Endothelial cell of umbilical vein (primary cell): ENCODE measurements at regions of chr17 and their contacts with region 1.

Region 1: GRCh38 chr17:31437720-31438420 is 46.4 kb downstream of the RAB11FIP4 start:
- DNase-seq: no peak
- H3K4me3 ChIP-seq: no peak overlapping the region
- H3K27ac ChIP-seq: no peak overlapping the region
- H3K4me1 ChIP-seq: no peaks in the 10 kb centered on the region
- H3K27me3 ChIP-seq: no peaks in the 10 kb centered on the region
- CTCF ChIP-seq: no peak
- POLR2A ChIP-seq: no peak

Region 2: GRCh38 chr17:31388770-31389661 is 48.9 kb before region 1 on chr17:
- CTCF ChIA-PET with region 1: interaction called, 11 read pairs
- POLR2A ChIA-PET with region 1: no interaction called
- dilution Hi-C with region 1: no loop called
- intact Hi-C with region 1: no loop called
- DNase-seq: peak; percentile 32
- H3K4me3 ChIP-seq: no peak overlapping the region
- H3K27ac ChIP-seq: no peak overlapping the region
- H3K4me1 ChIP-seq: no peaks in the 10 kb centered on the region
- H3K27me3 ChIP-seq: peaks cover 13 to 17% of the 10 kb centered on the region in 2 experiments
- CTCF ChIP-seq: peak; percentile 78 to 90
- POLR2A ChIP-seq: no peak

Region 3: GRCh38 chr17:31475378-31476162 is 37.7 kb after region 1 on chr17:
- CTCF ChIA-PET with region 1: no interaction called
- POLR2A ChIA-PET with region 1: no interaction called
- dilution Hi-C with region 1: no loop called
- intact Hi-C with region 1: no loop called
- DNase-seq: no peak
- H3K4me3 ChIP-seq: no peak overlapping the region
- H3K27ac ChIP-seq: no peak overlapping the region
- H3K4me1 ChIP-seq: no peaks in the 10 kb centered on the region
- H3K27me3 ChIP-seq: peaks cover 3 to 7% of the 10 kb centered on the region in 2 experiments
- CTCF ChIP-seq: no peak
- POLR2A ChIP-seq: no peak

Region 4: DNA sequence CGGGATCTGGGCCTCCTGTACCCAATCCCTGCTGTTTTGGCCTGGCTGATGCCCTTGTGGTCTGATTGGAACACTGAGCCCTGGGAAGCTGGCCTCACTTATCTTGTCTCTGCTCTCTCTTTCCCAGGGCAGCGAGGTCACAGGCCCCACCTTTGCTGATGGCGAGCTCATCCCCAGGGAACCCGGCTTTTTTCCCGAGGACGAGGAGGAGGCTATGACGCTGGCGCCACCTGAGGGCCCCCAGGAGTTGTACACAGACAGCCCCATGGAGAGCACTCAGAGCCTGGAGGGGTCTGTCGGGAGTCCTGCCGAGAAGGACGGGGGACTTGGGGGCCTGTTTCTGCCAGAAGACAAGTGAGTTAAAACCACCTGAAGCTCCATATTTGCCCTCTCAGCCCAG is 79.7 kb after region 1 on chr17:
- CTCF ChIA-PET with region 1: interaction called, 85 read pairs
- POLR2A ChIA-PET with region 1: no interaction called
- dilution Hi-C with region 1: no loop called
- intact Hi-C with region 1: no loop called
- DNase-seq: no peak
- H3K4me3 ChIP-seq: no peak overlapping the region
- H3K27ac ChIP-seq: no peak overlapping the region
- H3K4me1 ChIP-seq: no peaks in the 10 kb centered on the region
- H3K27me3 ChIP-seq: no peaks in the 10 kb centered on the region
- CTCF ChIP-seq: peak in 1 of 2 donors; percentile 33
- POLR2A ChIP-seq: no peak

Region 5: DNA sequence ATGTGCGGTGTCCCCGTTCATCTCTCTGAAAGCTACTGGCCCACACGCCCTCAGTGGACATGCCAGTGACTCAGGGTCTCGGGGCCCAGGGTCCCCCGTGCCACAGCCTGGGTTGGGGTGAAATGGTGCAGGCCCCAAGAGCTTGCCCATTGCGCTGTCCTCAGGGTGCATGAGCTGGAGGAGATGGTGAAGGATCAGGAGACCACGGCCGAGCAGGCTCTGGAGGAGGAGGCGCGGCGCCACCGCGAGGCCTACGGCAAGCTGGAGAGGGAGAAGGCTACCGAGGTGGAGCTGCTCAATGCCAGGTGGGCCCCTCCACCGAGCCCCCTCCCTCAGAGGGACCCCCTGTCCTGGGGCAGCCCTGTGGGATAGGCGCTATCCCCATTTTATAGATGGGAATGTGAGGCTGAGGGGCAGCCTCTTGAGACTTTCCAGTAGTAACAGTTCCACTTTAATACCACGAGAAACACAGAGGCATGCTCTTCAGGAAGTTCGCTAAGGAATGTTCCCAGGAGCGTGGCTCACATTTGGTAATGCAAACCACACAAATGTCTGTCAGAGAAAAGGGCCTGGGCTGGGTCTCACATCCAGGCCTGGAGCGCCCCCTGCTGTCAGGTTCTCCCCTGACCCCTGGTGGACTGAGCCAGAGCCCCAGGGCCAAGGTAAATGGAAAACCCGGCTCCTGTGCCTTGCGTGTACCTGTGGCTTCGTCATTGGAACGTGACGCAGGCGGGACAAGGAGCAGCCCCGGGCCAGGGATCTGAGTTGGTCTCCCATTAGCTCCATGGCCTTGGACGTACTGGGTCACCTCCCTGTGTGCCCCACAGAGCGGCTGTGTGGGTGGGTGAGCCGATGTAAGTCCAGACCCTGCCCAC is 87.3 kb after region 1 on chr17:
- CTCF ChIA-PET with region 1: interaction called, 85 read pairs
- POLR2A ChIA-PET with region 1: no interaction called
- dilution Hi-C with region 1: no loop called
- intact Hi-C with region 1: loop called (anchors 1 kb)
- DNase-seq: peak; percentile 51
- H3K4me3 ChIP-seq: no peak overlapping the region
- H3K27ac ChIP-seq: no peak overlapping the region
- H3K4me1 ChIP-seq: no peaks in the 10 kb centered on the region
- H3K27me3 ChIP-seq: no peaks in the 10 kb centered on the region
- CTCF ChIP-seq: peak; percentile 92 to 93
- POLR2A ChIP-seq: no peak

Region 6: DNA sequence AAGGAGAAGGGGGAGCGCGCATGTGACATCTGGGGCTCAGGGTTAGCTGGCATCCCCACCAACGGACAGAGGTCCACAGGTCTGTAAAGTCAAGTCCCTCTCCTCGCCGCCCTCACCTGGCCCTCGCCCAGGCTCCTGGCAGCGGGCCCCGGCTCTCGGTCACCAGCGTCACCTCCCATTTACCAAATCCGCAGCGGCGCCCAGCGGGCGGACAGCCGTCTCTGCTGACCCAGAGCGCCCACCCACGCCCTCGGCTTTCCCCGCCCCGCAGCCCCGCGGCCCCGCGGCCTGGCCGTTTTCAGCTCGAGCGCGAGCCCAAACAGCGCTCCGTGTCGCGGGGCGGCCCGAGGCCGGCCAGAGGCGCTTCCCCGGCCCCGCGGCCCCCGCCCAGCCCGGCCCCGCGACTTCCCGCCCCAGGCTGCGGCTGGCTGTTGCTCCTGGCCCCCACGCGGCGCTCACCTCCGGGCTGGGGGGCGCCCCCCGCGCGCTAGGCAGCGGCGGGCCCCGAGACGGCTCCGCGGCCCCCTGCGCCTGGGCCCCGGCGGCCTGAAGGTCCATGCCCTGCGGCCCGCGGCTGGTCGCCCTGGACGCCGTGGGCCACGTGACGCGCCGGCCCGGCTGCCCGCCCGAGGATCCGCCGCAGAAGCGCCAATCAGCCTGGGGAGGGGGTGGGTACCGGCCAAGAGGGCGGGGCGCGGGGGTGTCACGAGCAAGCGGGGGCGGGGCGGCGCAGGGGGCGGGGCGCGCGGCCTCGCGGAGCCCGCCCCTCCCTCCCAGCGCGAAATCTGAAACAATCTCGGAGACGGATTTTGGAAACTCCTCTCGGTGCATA is 421.0 kb after region 1 on chr17 and contains the start of gene COPRS:
- CTCF ChIA-PET with region 1: no interaction called
- POLR2A ChIA-PET with region 1: no interaction called
- dilution Hi-C with region 1: no loop called
- intact Hi-C with region 1: loop called (anchors 5 kb)
- DNase-seq: peak; percentile 78
- H3K4me3 ChIP-seq: peak within 1 kb of the TSS; percentile 44 to 82 (median 77)
- H3K27ac ChIP-seq: peak within 1 kb of the TSS; percentile 4
- H3K4me1 ChIP-seq: peaks cover 12% of the 10 kb centered on the region
- H3K27me3 ChIP-seq: no peaks in the 10 kb centered on the region
- CTCF ChIP-seq: peak in 1 of 2 donors; percentile 8
- POLR2A ChIP-seq: peak; percentile 67
- total RNA-seq, gene COPRS: 48.0 and 48.8 TPM in 2 replicates

Region 7: DNA sequence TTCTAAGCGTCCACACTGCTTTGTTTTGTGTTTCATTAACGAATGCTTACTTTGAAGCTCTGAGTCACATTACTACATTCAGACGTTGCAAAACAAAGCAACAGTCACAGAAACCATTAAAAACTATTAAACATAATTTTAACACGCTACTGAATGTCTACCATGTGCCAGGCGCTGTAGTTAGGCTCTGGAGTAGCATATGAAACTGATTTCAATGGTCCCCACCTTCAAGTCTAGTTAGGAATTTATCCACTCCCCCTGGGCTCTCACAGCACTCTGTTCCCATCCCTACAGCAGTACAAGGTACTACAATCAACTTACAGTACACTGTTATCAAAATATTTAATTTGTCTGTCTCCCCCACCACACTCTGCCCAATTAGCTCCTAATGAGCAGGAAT is 463.0 kb after region 1 on chr17:
- CTCF ChIA-PET with region 1: interaction called, 14 read pairs
- POLR2A ChIA-PET with region 1: no interaction called
- dilution Hi-C with region 1: no loop called
- intact Hi-C with region 1: loop called (anchors 1 kb)
- DNase-seq: no peak
- H3K4me3 ChIP-seq: peak overlapping the region; percentile 71 to 92 (median 71)
- H3K27ac ChIP-seq: no peak overlapping the region
- H3K4me1 ChIP-seq: peaks cover 5% of the 10 kb centered on the region
- H3K27me3 ChIP-seq: no peaks in the 10 kb centered on the region
- CTCF ChIP-seq: no peak
- POLR2A ChIP-seq: no peak

Region 8: DNA sequence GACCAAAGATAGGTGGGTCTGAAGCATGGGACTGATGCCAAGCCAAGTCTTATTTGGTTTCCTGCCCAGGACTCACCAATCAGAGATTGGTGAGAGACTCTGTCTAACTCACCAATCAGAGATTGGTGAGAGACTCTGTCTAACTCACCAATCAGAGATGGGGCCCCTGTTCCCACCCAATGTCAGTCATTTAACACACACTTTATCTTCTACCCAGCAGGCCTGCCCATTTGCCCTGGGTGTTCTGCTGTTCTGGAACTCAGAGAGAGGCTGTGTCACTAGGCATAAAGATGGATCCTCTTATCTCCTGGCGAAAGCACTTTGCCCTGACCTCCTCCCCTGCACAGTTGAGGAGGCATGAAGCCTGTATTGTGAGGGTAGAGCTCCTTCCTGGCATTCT is 699.0 kb after region 1 on chr17:
- CTCF ChIA-PET with region 1: no interaction called
- POLR2A ChIA-PET with region 1: no interaction called
- dilution Hi-C with region 1: no loop called
- intact Hi-C with region 1: loop called (anchors 5 kb)
- DNase-seq: no peak
- H3K4me3 ChIP-seq: no peak overlapping the region
- H3K27ac ChIP-seq: no peak overlapping the region
- H3K4me1 ChIP-seq: peaks cover 8% of the 10 kb centered on the region
- H3K27me3 ChIP-seq: no peaks in the 10 kb centered on the region
- CTCF ChIP-seq: no peak
- POLR2A ChIP-seq: no peak